B cell (primary cell): ENCODE measurements at regions of chr16 and their contacts with region 1.

Region 1: DNA sequence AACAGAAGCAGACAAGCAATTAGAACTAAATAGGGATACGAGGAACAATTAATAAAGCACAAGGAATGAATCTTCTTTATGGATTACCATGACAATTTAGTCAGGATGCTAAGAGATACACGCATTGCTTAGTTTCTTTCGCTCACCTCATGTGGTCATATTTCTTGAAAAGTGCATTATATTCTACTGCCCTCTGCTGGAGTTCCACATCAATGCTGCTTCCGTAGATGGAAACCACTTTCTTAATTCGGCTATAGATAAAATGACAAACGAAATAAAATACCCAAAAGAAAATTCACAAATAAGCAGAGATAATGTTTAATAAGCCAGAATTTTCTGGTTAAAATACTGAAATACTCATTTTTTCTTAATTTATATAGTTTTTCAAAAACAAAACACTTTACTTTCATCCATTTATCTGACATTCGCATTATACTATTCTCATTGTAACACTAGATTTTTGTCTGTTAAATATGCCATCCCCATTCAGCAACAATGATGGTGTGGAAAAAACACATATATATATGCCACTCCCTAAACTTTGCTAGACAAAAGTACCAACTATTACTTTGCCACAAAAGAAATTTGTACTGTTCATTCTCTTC is 22.0 kb upstream of the PHLPP2 start:
- DNase-seq: peak; percentile 75
- ATAC-seq: peak; percentile 58
- H3K4me3 ChIP-seq: no peak overlapping the region
- H3K4me3 Mint-ChIP-seq: no peak overlapping the region
- H3K27ac ChIP-seq: no peak overlapping the region
- H3K27ac Mint-ChIP-seq: peak overlapping the region; percentile 50
- H3K4me1 ChIP-seq: no peaks in the 10 kb centered on the region
- H3K4me1 Mint-ChIP-seq: peaks cover 4% of the 10 kb centered on the region
- H3K27me3 ChIP-seq: no peaks in the 10 kb centered on the region
- H3K27me3 Mint-ChIP-seq: no peaks in the 10 kb centered on the region
- CTCF ChIP-seq: peak; percentile 85

Region 2: DNA sequence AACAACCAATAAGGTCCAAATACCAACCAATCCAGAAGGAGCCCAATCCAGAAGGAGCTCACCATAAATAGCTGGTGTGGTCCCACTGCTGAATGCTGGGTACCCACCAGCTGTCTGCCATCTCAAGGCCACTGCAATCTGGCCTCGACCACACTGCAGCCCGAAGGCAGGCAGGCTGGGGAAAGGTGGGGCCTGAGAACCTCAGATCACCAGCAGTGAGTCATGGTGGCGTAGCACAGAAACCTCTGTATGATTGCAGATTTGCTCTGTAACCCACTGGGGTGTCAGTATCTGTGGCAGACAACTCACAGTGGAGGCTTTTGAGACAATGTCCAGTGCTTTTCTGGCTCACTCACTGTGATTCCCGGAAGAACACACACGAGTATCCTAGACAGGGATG is 442.6 kb before region 1 on chr16:
- CTCF ChIA-PET with region 1: no interaction called
- POLR2A ChIA-PET with region 1: no interaction called
- intact Hi-C with region 1: no loop called
- DNase-seq: no peak
- ATAC-seq: no peak
- H3K4me3 ChIP-seq: no peak overlapping the region
- H3K4me3 Mint-ChIP-seq: no peak overlapping the region
- H3K27ac ChIP-seq: no peak overlapping the region
- H3K27ac Mint-ChIP-seq: no peak overlapping the region
- H3K4me1 ChIP-seq: no peaks in the 10 kb centered on the region
- H3K4me1 Mint-ChIP-seq: no peaks in the 10 kb centered on the region
- H3K27me3 ChIP-seq: peaks cover 0 to 12% (median 1%) of the 10 kb centered on the region in 4 experiments
- H3K27me3 Mint-ChIP-seq: peaks cover 33% of the 10 kb centered on the region
- CTCF ChIP-seq: no peak

Region 3: GRCh38 chr16:71676236-71676635 is 70.3 kb before region 1 on chr16:
- CTCF ChIA-PET with region 1: no interaction called
- POLR2A ChIA-PET with region 1: no interaction called
- intact Hi-C with region 1: loop called (anchors 2 kb)
- DNase-seq: no peak
- ATAC-seq: no peak
- H3K4me3 ChIP-seq: no peak overlapping the region
- H3K4me3 Mint-ChIP-seq: no peak overlapping the region
- H3K27ac ChIP-seq: no peak overlapping the region
- H3K27ac Mint-ChIP-seq: no peak overlapping the region
- H3K4me1 ChIP-seq: no peaks in the 10 kb centered on the region
- H3K4me1 Mint-ChIP-seq: no peaks in the 10 kb centered on the region
- H3K27me3 ChIP-seq: no peaks in the 10 kb centered on the region
- H3K27me3 Mint-ChIP-seq: no peaks in the 10 kb centered on the region
- CTCF ChIP-seq: no peak